Dorsolateral prefrontal cortex (tissue), 120 donors: ENCODE measurements at regions of chr5 and their contacts with region 1.

Region 1: DNA sequence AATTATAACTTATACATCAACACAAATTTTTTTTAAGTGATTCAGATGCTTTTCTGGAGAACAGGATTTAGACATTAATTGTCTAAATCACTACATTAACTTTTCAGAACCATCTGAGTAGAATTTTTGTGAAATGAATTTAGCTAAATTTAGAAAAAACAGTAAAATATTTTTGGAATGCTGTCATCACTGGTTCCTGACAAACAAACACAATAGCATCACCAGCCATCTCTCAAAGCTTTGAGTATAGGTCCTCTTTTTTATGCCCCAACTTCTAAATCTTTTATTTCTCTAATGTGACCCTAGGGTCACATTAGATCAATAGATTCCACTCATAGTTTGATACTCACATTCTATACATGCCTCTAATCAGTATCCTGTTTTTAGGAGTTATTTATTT is 104.6 kb downstream of the PRR16 start:
- DNase-seq: no peak
- H3K4me3 ChIP-seq: no peak overlapping the region
- H3K27ac ChIP-seq: no peak overlapping the region
- H3K27me3 ChIP-seq: no peaks in the 10 kb centered on the region
- CTCF ChIP-seq: no peak

Region 2: DNA sequence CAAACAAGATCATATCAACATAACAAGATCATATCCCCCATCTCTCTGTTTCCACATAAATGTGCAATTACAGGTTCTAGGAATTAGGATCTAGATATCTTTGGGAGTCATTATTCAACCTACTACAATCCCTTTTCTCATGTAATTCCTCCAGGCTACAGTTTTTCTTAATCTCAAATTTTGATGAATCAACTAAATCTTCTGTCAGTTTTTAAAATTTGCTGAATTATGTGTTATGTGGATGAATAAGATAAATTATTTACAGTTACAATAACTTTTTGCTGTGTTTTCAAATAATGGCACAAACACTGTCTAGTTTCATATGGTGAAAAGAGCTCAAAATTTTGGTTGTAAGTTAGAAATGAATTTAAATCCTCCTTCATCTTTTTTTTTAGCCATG is 533.5 kb before region 1 on chr5:
- intact Hi-C with region 1: no loop called
- DNase-seq: no peak
- H3K4me3 ChIP-seq: no peak overlapping the region
- H3K27ac ChIP-seq: no peak overlapping the region
- H3K27me3 ChIP-seq: no peaks in the 10 kb centered on the region
- CTCF ChIP-seq: no peak

Region 3: GRCh38 chr5:120368923-120369715 is 199.6 kb before region 1 on chr5:
- intact Hi-C with region 1: no loop called
- DNase-seq: no peak
- H3K4me3 ChIP-seq: no peak overlapping the region
- H3K27ac ChIP-seq: no peak overlapping the region
- H3K27me3 ChIP-seq: no peaks in the 10 kb centered on the region
- CTCF ChIP-seq: no peak

Region 4: GRCh38 chr5:120586646-120587045 is 17.9 kb after region 1 on chr5:
- intact Hi-C with region 1: loop called in 1 of 2 experiments (anchors 2 kb)
- DNase-seq: no peak
- H3K4me3 ChIP-seq: no peak overlapping the region
- H3K27ac ChIP-seq: no peak overlapping the region
- H3K27me3 ChIP-seq: no peaks in the 10 kb centered on the region
- CTCF ChIP-seq: no peak